Caco-2 (cell line): ENCODE measurements at regions of chr2 and their contacts with region 1.

Region 1: DNA sequence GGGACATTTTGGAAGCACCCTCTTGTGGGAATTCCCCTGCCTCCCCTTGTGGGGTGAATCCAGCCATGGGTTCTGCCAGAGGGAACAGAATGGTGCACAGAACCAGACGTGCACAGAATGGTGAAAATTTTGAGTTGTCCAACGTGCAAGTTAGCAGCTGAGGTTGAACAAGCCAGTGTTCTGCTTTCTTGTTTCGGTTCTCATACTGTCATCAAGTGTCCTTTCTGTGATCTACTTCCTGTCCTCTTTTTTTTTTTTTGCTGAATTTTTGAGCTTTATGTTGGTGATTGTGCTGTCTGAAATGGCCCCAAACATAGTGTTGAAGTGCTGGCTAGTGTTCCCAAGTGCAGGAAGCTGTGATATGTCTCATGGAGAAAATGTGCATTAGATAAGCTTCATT is 21.5 kb upstream of the REEP1 start:
- DNase-seq: no peak
- H3K4me3 ChIP-seq: no peak overlapping the region
- H3K4me3 Mint-ChIP-seq: no peak overlapping the region
- H3K27ac Mint-ChIP-seq: no peak overlapping the region
- H3K4me1 ChIP-seq: no peaks in the 10 kb centered on the region
- H3K4me1 Mint-ChIP-seq: peaks cover 10% of the 10 kb centered on the region
- H3K27me3 ChIP-seq: no peaks in the 10 kb centered on the region
- H3K27me3 Mint-ChIP-seq: no peaks in the 10 kb centered on the region
- CTCF ChIP-seq: no peak

Region 2: DNA sequence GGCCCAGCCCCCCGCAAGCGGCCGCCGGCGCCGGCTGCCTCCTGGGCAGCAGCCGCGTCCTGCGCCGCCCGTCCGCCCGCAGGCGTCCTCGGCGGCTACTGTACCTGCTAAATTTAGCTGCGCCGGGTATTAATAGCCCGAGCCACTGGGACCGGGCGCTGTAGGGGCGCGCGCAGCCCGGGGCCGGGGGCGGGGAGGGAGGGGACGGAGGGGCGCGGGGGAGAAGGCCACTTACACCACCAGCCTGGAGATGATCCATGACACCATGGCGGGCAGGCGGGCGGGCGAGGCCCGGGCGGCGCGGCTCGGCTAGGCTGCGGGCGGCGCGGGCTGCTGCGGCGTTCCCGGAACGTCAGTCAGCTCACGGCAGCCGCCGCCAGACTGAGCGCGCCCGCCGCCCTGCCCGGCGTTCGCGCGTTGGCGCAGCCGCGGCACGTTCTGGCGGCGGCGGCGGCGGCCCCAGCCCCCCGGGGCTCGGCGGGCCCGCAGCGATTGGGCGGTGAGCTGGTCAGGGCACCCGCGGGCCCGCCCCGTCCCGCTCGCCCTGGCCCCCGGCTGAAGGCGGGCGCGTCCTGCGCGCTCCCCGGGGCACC is 21.6 kb before region 1 on chr2 and contains the start of gene REEP1:
- CTCF ChIA-PET with region 1: interaction called, 3 read pairs
- POLR2A ChIA-PET with region 1: no interaction called
- intact Hi-C with region 1: loop called (anchors 2 kb)
- DNase-seq: peak in 1 of 2 experiments; percentile 70
- H3K4me3 ChIP-seq: peak within 1 kb of the TSS; percentile 40
- H3K4me3 Mint-ChIP-seq: peak within 1 kb of the TSS; percentile 87
- H3K27ac Mint-ChIP-seq: no peak within 1 kb of the TSS
- H3K4me1 ChIP-seq: peaks cover 9% of the 10 kb centered on the region
- H3K4me1 Mint-ChIP-seq: peaks cover 19% of the 10 kb centered on the region
- H3K27me3 ChIP-seq: no peaks in the 10 kb centered on the region
- H3K27me3 Mint-ChIP-seq: peaks cover 3% of the 10 kb centered on the region
- CTCF ChIP-seq: no peak
- total RNA-seq, gene REEP1: 14.9 and 16.6 TPM in 2 replicates

Region 3: DNA sequence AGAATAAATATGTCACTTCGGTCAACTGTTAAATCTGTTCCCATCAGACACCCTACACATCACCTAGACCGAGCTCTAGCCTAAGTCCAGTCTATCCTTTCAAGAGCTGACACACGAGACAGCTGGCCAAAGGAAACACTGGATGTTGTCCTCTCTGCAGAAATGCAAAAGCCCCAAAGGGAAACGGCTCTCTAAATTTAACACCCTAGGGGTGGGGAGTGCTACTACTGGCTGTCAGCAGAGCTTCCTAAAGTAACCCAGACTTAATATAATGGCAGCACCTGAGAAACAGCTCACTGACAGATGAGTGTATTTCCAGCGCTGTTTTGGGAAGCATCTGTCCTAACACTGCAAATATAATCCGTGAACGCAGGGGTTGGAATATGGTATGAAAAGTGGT is 148.6 kb after region 1 on chr2:
- CTCF ChIA-PET with region 1: no interaction called
- POLR2A ChIA-PET with region 1: no interaction called
- intact Hi-C with region 1: no loop called
- DNase-seq: no peak
- H3K4me3 ChIP-seq: no peak overlapping the region
- H3K4me3 Mint-ChIP-seq: no peak overlapping the region
- H3K27ac Mint-ChIP-seq: no peak overlapping the region
- H3K4me1 ChIP-seq: peaks cover 10% of the 10 kb centered on the region; the same call in 1 of the 2 replicates
- H3K4me1 Mint-ChIP-seq: no peaks in the 10 kb centered on the region
- H3K27me3 ChIP-seq: no peaks in the 10 kb centered on the region
- H3K27me3 Mint-ChIP-seq: no peaks in the 10 kb centered on the region
- CTCF ChIP-seq: no peak